ENCODE measurements at regions of chr9 and their contacts with region 1.

Region 1: DNA sequence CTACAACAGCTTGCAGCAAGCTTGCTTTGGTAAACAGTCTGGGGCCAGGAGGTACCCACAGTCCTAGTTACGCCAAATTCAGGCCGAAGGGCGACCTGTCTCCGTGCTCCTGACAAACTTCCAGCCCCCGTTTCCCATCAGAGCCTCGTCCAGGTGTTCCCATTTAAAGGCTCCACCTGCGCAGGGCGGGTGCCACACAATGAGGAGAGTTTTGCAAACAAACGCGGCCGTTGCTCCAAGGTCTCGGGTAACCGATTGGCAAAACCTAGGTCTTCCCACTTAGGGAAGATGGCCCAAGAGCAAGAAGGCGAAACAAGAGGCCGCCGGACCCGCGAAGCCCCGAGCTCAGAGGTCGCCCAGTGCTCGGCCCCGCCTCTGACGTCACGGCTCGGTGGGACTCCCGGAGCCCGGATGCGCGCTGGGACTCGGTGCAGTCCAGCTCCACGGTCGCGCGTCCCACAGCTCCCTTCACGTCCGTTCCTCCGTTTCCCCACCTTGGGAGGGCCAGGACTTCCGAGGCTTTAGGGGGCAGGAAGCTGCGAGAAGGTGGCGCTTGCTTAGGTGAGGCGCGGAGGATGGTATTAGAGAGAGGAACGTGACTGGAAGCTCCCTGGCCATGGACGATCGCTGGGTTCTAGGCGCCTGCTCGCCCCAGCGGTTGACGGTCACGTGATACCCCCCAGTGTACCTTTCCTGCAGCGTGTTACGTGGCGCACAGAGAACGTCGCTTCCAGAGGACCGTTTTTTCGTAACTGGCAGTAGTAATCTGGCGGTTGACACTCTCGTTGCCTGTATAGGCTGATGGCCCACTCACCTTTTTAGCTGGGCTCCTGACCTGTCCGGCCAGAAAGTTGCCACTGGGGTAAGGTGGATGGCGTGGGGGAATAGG is 41.8 kb upstream of the KDM4C start:
- DNase-seq: peak; percentile 58 to 70 (median 65)
- H3K4me3 ChIP-seq: peak overlapping the region; percentile 11 to 57
- H3K4me3 Mint-ChIP-seq: peak overlapping the region; percentile 85 to 94 (median 88)
- H3K27ac ChIP-seq: peak overlapping the region; percentile 66
- H3K27ac Mint-ChIP-seq: peak overlapping the region; percentile 53 to 93 (median 86)
- H3K4me1 ChIP-seq: peaks cover 12% of the 10 kb centered on the region
- H3K4me1 Mint-ChIP-seq: peaks cover 4 to 10% (median 6%) of the 10 kb centered on the region in 4 donors
- H3K27me3 ChIP-seq: no peaks in the 10 kb centered on the region
- H3K27me3 Mint-ChIP-seq: no peaks in the 10 kb centered on the region

Region 2: GRCh38 chr9:6655036-6655435 is 61.0 kb before region 1 on chr9:
- CTCF ChIA-PET with region 1: no interaction called
- POLR2A ChIA-PET with region 1: no interaction called
- intact Hi-C with region 1: no loop called
- DNase-seq: no peak
- H3K4me3 ChIP-seq: no peak overlapping the region
- H3K4me3 Mint-ChIP-seq: peak overlapping the region in 7 of 8 donors; percentile 52 to 80 (median 59)
- H3K27ac ChIP-seq: no peak overlapping the region
- H3K27ac Mint-ChIP-seq: peak overlapping the region in 2 of 7 donors; percentile 20 to 29
- H3K4me1 ChIP-seq: no peaks in the 10 kb centered on the region
- H3K4me1 Mint-ChIP-seq: peaks cover 4 to 10% (median 5%) of the 10 kb centered on the region in 4 donors
- H3K27me3 ChIP-seq: no peaks in the 10 kb centered on the region
- H3K27me3 Mint-ChIP-seq: peaks cover 10 to 11% of the 10 kb centered on the region in 2 donors

Region 3: DNA sequence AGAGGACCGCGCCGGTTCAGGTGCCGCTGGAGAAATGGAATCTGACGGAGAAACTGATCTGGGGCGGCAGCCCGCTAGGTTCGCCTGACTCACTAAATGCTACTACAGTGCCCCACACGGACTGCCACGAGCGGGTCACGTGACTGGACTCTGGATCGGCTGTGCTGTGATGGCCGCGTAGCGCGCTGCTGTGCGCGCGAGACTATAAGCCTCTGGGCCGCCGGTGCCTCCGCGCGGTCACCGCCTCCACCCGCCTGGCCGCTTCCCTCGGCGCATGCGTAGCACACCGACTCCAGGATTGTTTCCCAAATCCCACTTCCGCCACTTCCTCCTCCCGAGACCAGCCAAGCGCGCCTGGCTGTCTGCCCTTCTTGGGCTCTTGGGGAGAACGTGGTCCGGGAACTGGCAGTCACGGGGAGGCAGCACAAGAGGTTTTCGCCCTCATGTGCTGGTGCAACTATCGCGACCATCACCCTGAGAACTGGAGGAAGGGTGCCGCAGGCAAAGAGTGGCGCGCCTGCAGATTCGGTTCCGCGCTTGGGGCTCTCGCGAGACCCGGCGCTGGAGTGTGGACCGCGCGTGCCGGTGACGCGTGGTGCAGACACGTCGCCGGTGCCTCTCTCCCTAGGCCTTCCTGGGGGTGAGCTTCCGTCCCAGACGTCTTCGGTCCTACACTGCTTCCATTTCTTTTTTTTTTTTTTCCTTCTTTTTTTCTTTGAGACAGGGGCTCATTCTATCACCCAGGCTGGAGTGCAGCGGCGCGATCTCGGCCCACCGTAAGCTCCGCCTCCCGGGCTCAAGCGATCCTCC is 34.6 kb before region 1 on chr9:
- CTCF ChIA-PET with region 1: interaction called, 4 read pairs
- POLR2A ChIA-PET with region 1: interaction called, 24 read pairs
- intact Hi-C with region 1: loop called (anchors 1 kb)
- DNase-seq: peak; percentile 92 to 96 (median 94)
- H3K4me3 ChIP-seq: peak overlapping the region; percentile 91 to 99
- H3K4me3 Mint-ChIP-seq: peak overlapping the region; percentile 93 to 97 (median 95)
- H3K27ac ChIP-seq: peak overlapping the region; percentile 82
- H3K27ac Mint-ChIP-seq: peak overlapping the region; percentile 94 to 100 (median 99)
- H3K4me1 ChIP-seq: peaks cover 23% of the 10 kb centered on the region
- H3K4me1 Mint-ChIP-seq: peaks cover 14 to 34% (median 22%) of the 10 kb centered on the region in 4 donors
- H3K27me3 ChIP-seq: no peaks in the 10 kb centered on the region
- H3K27me3 Mint-ChIP-seq: no peaks in the 10 kb centered on the region

Region 4: DNA sequence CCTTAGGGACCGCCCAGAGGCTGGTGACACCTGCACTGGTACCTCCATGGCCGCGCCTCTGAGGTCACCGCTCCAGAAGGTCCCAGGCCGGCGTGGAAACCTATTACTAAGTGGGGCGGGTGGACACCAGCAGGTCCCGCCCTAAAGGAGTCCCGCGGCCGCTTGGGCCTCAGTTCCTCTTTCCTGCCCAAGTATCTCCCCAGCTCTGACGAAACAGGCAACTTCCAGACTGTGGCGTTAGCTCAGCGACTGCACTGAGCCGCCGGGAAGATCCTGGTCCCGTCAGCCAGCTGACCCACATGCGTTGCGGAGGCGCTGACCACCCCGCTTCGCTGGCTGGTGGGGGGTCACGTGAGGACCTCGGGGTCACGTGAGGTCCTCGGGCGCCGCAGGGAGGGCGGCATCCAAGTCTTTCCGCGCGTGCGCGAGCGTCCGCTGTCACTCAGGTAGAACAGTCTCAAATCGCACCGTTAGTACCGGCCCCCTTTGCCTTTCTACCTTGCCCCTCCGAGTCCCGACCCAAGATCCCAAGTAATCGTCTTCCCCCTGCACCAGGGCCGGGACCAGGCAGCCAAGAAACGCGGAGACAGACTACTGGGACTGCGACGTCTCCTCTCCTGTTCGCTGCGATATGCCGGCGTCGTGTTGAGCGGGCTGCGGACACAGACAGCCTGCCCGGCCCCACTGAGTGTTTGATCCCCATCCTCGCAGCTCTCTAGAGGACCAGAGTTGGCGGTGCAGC is 11.9 kb before region 1 on chr9:
- CTCF ChIA-PET with region 1: interaction called, 3 read pairs
- POLR2A ChIA-PET with region 1: interaction called, 41 read pairs
- intact Hi-C with region 1: loop called (anchors 1 kb)
- DNase-seq: peak; percentile 75 to 78 (median 78)
- H3K4me3 ChIP-seq: peak overlapping the region; percentile 86 to 91
- H3K4me3 Mint-ChIP-seq: peak overlapping the region; percentile 91 to 98 (median 95)
- H3K27ac ChIP-seq: peak overlapping the region; percentile 92
- H3K27ac Mint-ChIP-seq: peak overlapping the region; percentile 93 to 99 (median 96)
- H3K4me1 ChIP-seq: peaks cover 12% of the 10 kb centered on the region
- H3K4me1 Mint-ChIP-seq: peaks cover 2 to 15% (median 11%) of the 10 kb centered on the region in 4 donors
- H3K27me3 ChIP-seq: no peaks in the 10 kb centered on the region
- H3K27me3 Mint-ChIP-seq: peaks cover 0 to 1% of the 10 kb centered on the region in 2 donors

Region 5: DNA sequence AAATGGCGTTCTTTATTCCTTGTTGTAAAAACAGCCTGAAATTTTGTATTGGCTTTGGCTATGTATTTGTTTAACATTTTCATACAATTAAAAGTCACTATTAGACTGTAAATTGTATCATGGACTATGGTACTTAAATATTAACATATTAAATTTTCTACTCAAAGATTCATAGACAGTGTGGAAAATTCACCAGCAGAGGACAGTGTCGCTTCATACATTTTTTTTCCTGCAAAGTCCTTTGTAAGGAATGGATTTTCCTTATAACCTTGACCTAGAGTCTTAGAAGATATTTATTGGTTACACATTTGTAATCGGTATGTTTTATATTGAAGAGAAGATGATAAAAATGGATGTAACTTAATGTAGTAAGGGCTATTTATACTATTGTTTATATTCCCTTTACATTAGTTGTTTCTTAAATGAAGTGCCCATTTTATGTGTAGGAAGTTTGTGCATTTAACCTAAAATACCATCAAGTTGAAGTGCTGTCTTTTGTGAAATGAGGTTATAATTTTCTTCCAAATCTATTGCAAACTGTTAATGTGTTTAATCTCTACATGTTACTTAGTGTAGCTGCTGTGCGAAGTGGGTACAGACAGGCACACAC is 191.9 kb after region 1 on chr9:
- CTCF ChIA-PET with region 1: no interaction called
- POLR2A ChIA-PET with region 1: no interaction called
- intact Hi-C with region 1: no loop called
- DNase-seq: no peak
- H3K4me3 ChIP-seq: no peak overlapping the region
- H3K4me3 Mint-ChIP-seq: no peak overlapping the region
- H3K27ac ChIP-seq: no peak overlapping the region
- H3K27ac Mint-ChIP-seq: peak overlapping the region in 1 of 7 donors; percentile 40
- H3K4me1 ChIP-seq: no peaks in the 10 kb centered on the region
- H3K4me1 Mint-ChIP-seq: peaks cover 12 to 19% (median 14%) of the 10 kb centered on the region in 4 donors
- H3K27me3 ChIP-seq: no peaks in the 10 kb centered on the region
- H3K27me3 Mint-ChIP-seq: no peaks in the 10 kb centered on the region